Ascending aorta (tissue), 2 donors: ENCODE measurements at regions of chr22 and their contacts with region 1.

Region 1: DNA sequence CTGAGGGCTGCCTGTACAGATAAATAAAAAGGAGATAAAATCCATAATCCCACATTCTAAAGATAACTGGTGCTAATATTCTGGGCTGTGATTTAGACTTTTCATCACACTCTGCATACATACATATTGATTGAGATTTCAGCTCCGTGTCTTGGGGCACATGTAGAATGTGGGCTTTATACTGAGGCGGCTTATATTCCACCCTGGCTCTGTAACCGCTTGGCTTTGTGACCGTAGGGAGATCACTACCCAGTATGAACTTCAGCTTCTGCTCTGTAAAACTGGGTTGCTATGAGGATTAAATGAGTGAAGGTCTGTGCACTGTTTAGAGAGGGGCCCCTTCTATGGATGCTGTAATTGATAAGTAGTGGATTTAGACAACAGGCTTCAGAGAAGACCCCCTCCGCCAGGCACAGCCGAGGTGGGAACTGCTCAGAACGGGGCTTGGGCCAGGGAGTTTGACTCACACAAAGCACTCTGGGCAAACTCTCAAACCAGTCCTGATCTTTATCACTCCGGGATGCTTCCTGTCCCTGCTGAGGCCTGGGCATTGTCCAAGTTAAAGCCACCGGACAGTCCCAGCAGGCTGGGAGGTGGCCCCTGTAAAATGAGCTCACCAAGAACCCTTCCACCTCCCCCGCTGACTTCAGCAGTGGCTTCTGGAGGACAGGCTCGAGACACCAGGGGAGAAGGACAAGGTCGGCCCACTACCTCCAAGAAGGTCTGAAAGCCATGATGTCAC is 17.2 kb downstream of the KIAA1671 start:
- DNase-seq: peak; percentile 12 to 78
- H3K4me3 ChIP-seq: no peak overlapping the region
- H3K27ac ChIP-seq: peak overlapping the region; percentile 29 to 56
- H3K4me1 ChIP-seq: peaks cover 0 to 2% of the 10 kb centered on the region in 2 donors
- H3K27me3 ChIP-seq: no peaks in the 10 kb centered on the region
- CTCF ChIP-seq: no peak

Region 2: GRCh38 chr22:24407278-24407665 is 562.5 kb before region 1 on chr22:
- intact Hi-C with region 1: loop called (anchors 5 kb)
- DNase-seq: no peak
- H3K4me3 ChIP-seq: no peak overlapping the region
- H3K27ac ChIP-seq: no peak overlapping the region
- H3K4me1 ChIP-seq: peaks cover 9 to 27% of the 10 kb centered on the region in 2 donors
- H3K27me3 ChIP-seq: no peaks in the 10 kb centered on the region
- CTCF ChIP-seq: no peak